Activated naive CD4-positive, alpha-beta T cell treated with anti-CD3 and anti-CD28 coated beads for 36 hours (primary cell): ENCODE measurements at regions of chr12 and their contacts with region 1.

Region 1: GRCh38 chr12:123713398-123713797 is 1.2 kb downstream of the ATP6V0A2 start:
- DNase-seq: peak; percentile 26
- H3K4me3 Mint-ChIP-seq: peak overlapping the region; percentile 80
- H3K27ac Mint-ChIP-seq: peak overlapping the region; percentile 83
- H3K4me1 Mint-ChIP-seq: peaks cover 42% of the 10 kb centered on the region
- H3K27me3 Mint-ChIP-seq: no peaks in the 10 kb centered on the region

Region 2: DNA sequence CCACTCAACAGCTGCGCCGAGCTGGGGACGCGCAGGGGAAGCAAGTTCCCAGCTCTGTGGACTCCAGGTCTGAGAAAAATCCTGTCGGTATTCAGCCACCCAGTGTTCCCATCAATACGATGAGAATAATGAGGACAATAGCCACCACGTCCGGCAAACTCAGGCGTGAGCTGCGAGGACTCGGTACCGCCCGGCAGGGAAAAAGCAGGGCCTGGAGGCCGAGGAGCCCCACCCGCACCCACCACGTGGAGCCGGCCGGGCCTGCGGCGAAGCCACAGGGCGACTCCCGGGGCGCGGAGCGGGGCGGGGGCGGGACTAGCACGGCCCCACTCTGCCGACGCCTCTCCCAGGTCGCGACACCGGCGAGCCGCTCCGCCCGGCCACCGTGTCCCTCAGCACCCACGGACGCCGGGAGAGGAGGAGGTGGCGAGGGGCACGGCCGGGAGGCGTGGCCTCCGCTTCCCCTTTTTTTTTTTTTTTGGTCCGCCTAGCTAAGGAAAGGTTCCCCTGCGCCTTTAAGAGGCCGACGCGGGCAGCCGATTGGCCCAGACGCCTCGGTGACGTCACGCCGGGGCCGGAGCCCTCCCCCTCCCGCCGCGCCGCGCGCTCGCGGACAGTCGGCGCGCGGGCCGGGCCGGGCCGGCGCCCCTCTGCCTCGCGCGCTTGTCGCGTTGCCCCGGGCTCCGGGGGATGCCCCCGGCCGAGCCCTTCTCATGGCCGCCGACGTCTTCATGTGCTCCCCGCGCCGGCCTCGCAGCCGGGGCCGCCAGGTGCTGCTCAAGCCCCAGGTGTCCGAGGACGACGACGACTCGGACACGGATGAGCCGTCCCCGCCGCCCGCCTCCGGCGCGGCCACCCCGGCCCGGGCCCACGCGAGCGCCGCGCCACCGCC is 1635.0 kb before region 1 on chr12 and contains the start of gene MLXIP:
- CTCF ChIA-PET with region 1: no interaction called
- intact Hi-C with region 1: loop called (anchors 5 kb)
- DNase-seq: peak; percentile 91
- H3K4me3 Mint-ChIP-seq: peak within 1 kb of the TSS; percentile 85
- H3K27ac Mint-ChIP-seq: peak within 1 kb of the TSS; percentile 51
- H3K4me1 Mint-ChIP-seq: peaks cover 47% of the 10 kb centered on the region
- H3K27me3 Mint-ChIP-seq: no peaks in the 10 kb centered on the region
- total RNA-seq, gene MLXIP: 18.8 to 22.0 TPM

Region 3: DNA sequence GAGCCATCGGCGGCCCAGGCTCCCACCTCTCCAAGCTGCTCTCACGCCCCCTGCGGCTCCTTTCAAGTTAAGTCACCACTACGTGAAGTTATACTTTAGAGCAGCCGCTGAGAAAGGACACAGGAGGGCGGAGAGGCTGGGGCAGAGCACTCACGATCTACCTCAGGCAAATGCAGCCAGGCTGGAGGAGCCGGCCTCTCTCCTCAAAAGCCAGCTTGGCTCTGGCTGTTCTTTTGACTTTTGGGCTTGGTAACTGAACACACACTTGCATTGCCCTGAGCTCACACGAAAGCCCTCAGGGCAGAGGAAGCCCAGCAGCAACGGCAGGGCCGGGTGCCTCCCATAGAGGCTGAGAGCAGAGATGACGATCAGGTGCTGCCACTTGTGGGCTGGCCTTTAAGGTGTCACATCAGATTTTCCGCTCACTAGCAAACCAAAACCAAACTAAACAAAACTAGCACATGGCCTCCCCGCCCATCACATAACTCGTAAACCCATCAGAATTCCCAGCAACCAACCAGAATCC is 637.7 kb before region 1 on chr12:
- CTCF ChIA-PET with region 1: interaction called, 4 read pairs
- intact Hi-C with region 1: loop called (anchors 2 kb)
- DNase-seq: peak; percentile 90
- H3K4me3 Mint-ChIP-seq: peak overlapping the region; percentile 67
- H3K27ac Mint-ChIP-seq: peak overlapping the region; percentile 93
- H3K4me1 Mint-ChIP-seq: peaks cover 44% of the 10 kb centered on the region
- H3K27me3 Mint-ChIP-seq: no peaks in the 10 kb centered on the region

Region 4: GRCh38 chr12:123388177-123388947 is 325.0 kb before region 1 on chr12:
- CTCF ChIA-PET with region 1: no interaction called
- intact Hi-C with region 1: loop called (anchors 1 kb)
- DNase-seq: peak; percentile 85
- H3K4me3 Mint-ChIP-seq: peak overlapping the region; percentile 80
- H3K27ac Mint-ChIP-seq: peak overlapping the region; percentile 81
- H3K4me1 Mint-ChIP-seq: peaks cover 31% of the 10 kb centered on the region
- H3K27me3 Mint-ChIP-seq: no peaks in the 10 kb centered on the region

Region 5: GRCh38 chr12:123670882-123671728 is 42.3 kb before region 1 on chr12 and contains the start of gene TCTN2:
- CTCF ChIA-PET with region 1: no interaction called
- intact Hi-C with region 1: loop called (anchors 1 kb)
- DNase-seq: peak; percentile 95
- H3K4me3 Mint-ChIP-seq: peak within 1 kb of the TSS; percentile 81
- H3K27ac Mint-ChIP-seq: no peak within 1 kb of the TSS
- H3K4me1 Mint-ChIP-seq: peaks cover 17% of the 10 kb centered on the region
- H3K27me3 Mint-ChIP-seq: no peaks in the 10 kb centered on the region
- total RNA-seq, gene TCTN2: 3.0 to 3.5 TPM

Region 6: DNA sequence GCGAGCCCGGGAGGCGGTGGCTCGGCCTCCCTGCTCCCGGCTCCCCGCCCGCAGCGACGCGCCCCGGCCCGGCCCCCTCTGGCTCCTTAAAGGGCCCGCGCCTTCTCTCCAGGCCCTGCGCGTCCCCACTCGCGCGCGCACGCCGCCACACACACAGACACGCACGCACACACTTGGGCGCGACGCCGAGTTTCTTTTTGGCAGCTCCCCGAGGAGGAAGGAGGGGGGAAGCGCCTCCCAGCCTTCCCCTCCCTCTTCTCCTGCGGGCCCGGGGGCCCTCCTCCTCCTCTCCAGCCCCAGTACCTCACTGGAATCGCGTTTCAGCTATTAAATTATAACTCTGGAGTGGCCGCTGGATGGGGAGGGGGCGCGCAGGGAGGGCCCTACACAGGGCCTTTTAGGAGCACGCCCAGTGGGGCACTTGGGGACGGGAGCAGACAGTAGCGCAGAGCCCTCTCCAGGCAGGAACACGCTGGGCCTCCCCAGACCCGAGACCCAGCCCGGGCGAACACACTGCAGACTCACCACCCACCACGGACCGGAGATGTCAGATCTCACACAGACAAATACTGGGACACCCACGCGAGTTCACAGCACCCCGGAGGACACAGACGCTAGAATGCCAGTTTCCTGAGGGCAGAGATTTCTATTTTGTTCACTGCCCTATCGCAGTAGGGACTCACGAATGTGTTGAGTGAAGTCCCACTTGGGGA is 854.4 kb after region 1 on chr12:
- CTCF ChIA-PET with region 1: no interaction called
- intact Hi-C with region 1: loop called (anchors 5 kb)
- DNase-seq: peak; percentile 77
- H3K4me3 Mint-ChIP-seq: peak overlapping the region; percentile 80
- H3K27ac Mint-ChIP-seq: peak overlapping the region; percentile 87
- H3K4me1 Mint-ChIP-seq: peaks cover 33% of the 10 kb centered on the region
- H3K27me3 Mint-ChIP-seq: no peaks in the 10 kb centered on the region